ENCODE measurements at regions of chr14 and their contacts with region 1.

Region 1: GRCh38 chr14:74860906-74861733 is 14.8 kb downstream of the PROX2 start:
- DNase-seq: peak; percentile 89
- H3K4me3 Mint-ChIP-seq: no peak overlapping the region
- H3K27ac Mint-ChIP-seq: no peak overlapping the region
- H3K4me1 Mint-ChIP-seq: no peaks in the 10 kb centered on the region
- H3K27me3 Mint-ChIP-seq: peaks cover 6% of the 10 kb centered on the region
- CTCF ChIP-seq: peak; percentile 64

Region 2: GRCh38 chr14:74733221-74733620 is 127.9 kb before region 1 on chr14:
- CTCF ChIA-PET with region 1: no interaction called
- POLR2A ChIA-PET with region 1: no interaction called
- intact Hi-C with region 1: no loop called
- DNase-seq: no peak
- H3K4me3 Mint-ChIP-seq: no peak overlapping the region
- H3K27ac Mint-ChIP-seq: no peak overlapping the region
- H3K4me1 Mint-ChIP-seq: no peaks in the 10 kb centered on the region
- H3K27me3 Mint-ChIP-seq: no peaks in the 10 kb centered on the region
- CTCF ChIP-seq: no peak

Region 3: GRCh38 chr14:74771399-74771798 is 89.7 kb before region 1 on chr14:
- CTCF ChIA-PET with region 1: no interaction called
- POLR2A ChIA-PET with region 1: no interaction called
- intact Hi-C with region 1: no loop called
- DNase-seq: no peak
- H3K4me3 Mint-ChIP-seq: no peak overlapping the region
- H3K27ac Mint-ChIP-seq: no peak overlapping the region
- H3K4me1 Mint-ChIP-seq: peaks cover 31% of the 10 kb centered on the region
- H3K27me3 Mint-ChIP-seq: no peaks in the 10 kb centered on the region
- CTCF ChIP-seq: no peak

Region 4: DNA sequence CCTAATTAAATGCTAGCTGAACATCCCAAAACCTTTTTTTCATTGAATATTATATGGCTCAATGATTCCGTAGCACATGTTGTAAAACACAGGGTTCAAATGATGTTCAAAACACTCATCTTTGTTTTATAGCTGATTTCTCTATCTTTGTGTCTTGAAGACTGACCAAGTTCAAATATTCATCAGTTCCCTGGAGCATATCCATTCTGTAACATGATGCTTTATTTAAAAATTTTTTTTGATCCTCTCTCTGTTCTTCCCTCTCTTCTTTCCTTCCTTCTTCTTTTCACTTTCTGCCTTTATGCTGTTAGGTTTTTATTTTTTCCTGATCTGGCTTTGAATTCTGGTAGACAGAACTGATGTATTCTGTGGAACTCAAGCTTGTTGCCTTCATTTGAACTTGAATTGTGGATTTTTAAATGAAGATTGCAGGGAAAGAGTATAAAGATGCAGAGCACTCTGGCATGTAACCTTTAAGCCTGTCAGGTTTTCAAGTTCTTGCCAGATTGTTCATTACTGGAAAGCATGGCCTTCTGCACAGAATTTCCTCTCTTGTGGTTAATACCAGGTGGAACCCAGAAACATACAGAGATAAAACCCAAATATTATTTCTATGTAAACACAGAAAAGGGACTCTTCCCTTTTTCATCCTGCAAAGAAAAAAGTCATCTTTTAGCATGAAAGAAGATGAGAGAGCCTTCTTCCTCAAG is 24.7 kb before region 1 on chr14:
- CTCF ChIA-PET with region 1: interaction called, 12 read pairs
- POLR2A ChIA-PET with region 1: no interaction called
- intact Hi-C with region 1: no loop called
- DNase-seq: no peak
- H3K4me3 Mint-ChIP-seq: no peak overlapping the region
- H3K27ac Mint-ChIP-seq: no peak overlapping the region
- H3K4me1 Mint-ChIP-seq: peaks cover 6% of the 10 kb centered on the region
- H3K27me3 Mint-ChIP-seq: no peaks in the 10 kb centered on the region
- CTCF ChIP-seq: no peak

Region 5: GRCh38 chr14:74841230-74842207 is 19.6 kb before region 1 on chr14:
- CTCF ChIA-PET with region 1: interaction called, 38 read pairs
- POLR2A ChIA-PET with region 1: interaction called, 5 read pairs
- intact Hi-C with region 1: no loop called
- DNase-seq: no peak
- H3K4me3 Mint-ChIP-seq: no peak overlapping the region
- H3K27ac Mint-ChIP-seq: no peak overlapping the region
- H3K4me1 Mint-ChIP-seq: peaks cover 11% of the 10 kb centered on the region
- H3K27me3 Mint-ChIP-seq: no peaks in the 10 kb centered on the region
- CTCF ChIP-seq: no peak

Region 6: DNA sequence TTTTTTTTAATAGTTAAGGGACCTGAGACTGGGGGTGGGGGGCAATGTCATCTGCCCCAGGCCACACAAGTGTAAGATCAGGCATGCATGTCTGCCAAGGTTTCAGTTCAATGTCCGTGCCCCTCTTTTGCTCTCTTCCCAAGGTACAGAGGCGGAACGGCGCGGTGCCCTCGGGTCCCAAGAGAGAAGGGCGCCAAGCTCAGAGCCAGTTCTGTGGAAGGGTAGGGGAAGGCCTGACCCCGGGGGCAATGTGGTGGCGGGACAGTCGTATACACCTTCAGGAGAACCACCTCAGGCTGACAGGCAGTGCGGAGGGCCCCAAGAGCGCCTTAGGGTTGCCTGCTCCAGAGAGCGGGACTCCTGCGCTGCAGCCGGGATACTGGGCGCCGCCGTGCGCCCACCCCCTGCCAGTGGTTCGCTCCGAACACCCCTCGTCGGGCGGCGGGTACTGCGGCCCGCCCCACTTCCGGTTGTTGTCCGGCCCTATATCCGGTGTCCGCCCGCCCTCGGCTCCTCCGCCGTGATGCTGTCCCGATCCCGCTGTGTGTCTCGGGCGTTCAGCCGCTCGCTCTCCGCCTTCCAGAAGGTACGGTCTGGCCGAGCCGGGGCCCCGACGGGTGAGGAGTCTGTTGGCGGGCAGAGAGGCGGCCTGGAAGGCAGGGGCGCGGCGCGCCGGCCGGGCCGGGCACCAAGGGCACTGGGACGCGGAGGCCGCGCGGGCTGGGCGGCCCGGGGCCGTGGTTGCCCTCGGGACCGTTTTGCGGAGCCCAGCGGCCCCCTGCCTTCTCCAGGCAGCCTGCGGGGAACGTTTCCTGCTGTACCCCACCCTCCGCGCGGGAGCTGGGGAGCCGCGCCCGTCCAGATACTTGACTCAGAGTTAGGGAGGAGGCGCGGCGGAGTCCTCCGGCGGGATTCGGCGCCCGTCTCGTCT is 20.6 kb after region 1 on chr14 and contains the start of gene DLST:
- CTCF ChIA-PET with region 1: interaction called, 204 read pairs
- POLR2A ChIA-PET with region 1: interaction called, 8 read pairs
- intact Hi-C with region 1: no loop called
- DNase-seq: peak; percentile 84
- H3K4me3 Mint-ChIP-seq: peak within 1 kb of the TSS; percentile 99
- H3K27ac Mint-ChIP-seq: peak within 1 kb of the TSS; percentile 99
- H3K4me1 Mint-ChIP-seq: peaks cover 50% of the 10 kb centered on the region
- H3K27me3 Mint-ChIP-seq: no peaks in the 10 kb centered on the region
- CTCF ChIP-seq: no peak
- total RNA-seq, gene DLST: 114 and 139 TPM in 2 replicates

Region 7: DNA sequence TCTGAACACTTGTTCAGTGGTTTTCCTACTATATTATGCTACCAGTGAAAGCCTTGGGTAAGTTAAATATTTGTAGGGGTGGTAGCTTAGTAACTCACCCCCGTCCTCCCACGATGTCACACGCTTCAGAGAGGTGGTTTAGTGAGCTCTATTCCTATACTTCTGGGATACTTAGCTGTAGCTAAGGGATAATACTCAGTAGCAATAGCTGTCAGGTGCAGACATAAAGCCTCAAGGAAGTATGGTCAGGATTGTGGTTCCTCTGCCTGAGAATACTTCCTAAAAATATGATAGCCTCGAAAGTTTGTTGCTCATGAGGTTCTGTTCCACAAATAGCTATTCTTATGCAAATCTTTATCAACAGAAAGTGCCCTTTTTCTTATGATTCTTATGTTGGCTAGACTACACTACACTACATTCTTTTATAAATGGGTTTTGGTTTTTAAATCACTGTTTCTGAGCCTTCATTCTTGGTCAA is 32.5 kb after region 1 on chr14:
- CTCF ChIA-PET with region 1: interaction called, 26 read pairs
- POLR2A ChIA-PET with region 1: interaction called, 3 read pairs
- intact Hi-C with region 1: no loop called
- DNase-seq: no peak
- H3K4me3 Mint-ChIP-seq: no peak overlapping the region
- H3K27ac Mint-ChIP-seq: no peak overlapping the region
- H3K4me1 Mint-ChIP-seq: peaks cover 5% of the 10 kb centered on the region
- H3K27me3 Mint-ChIP-seq: no peaks in the 10 kb centered on the region
- CTCF ChIP-seq: no peak

Region 8: GRCh38 chr14:74913986-74914573 is 53.0 kb after region 1 on chr14:
- CTCF ChIA-PET with region 1: interaction called, 182 read pairs
- POLR2A ChIA-PET with region 1: no interaction called
- intact Hi-C with region 1: no loop called
- DNase-seq: peak; percentile 81
- H3K4me3 Mint-ChIP-seq: no peak overlapping the region
- H3K27ac Mint-ChIP-seq: no peak overlapping the region
- H3K4me1 Mint-ChIP-seq: peaks cover 14% of the 10 kb centered on the region
- H3K27me3 Mint-ChIP-seq: no peaks in the 10 kb centered on the region
- CTCF ChIP-seq: peak; percentile 61